ENCODE measurements at regions of chr9 and their contacts with region 1.

Region 1: DNA sequence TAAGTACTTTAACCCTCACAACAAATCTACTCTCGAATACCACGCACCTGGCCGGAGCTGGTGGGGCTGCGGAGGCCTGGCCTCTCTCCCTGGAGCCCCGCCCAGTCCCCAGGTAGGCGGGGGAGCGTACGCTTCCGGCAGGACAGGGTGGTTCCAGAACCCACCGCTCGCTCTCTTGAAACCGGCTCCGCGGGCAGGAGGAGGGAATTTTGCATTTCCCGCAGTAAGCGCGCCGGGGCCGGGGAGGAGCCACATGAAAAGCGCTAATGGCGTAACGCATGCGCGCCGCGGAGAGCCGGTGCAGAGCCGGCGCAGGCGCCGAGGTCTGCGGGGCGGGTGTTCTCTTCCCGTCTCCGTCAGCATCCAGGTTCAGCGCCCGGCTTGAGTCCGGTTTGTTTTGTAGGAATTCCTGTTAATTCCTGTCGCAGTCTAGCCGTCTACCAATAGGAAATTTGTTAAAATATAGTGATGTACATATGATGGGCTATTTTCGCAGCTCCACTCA is 20.8 kb downstream of the CAVIN4 start:
- DNase-seq: peak; percentile 63 to 76
- ATAC-seq: peak; percentile 69 to 90
- H3K4me3 ChIP-seq: peak overlapping the region; percentile 62
- H3K27ac ChIP-seq: peak overlapping the region; percentile 67 to 80
- H3K4me1 ChIP-seq: peaks cover 3% of the 10 kb centered on the region; the same call in 1 of the 3 replicates
- CTCF ChIP-seq: no peak
- EP300 ChIP-seq: no peak
- POLR2A ChIP-seq: peak; percentile 51
- RAD21 ChIP-seq: no peak

Region 2: GRCh38 chr9:100322954-100323536 is 275.6 kb before region 1 on chr9:
- CTCF ChIA-PET with region 1: interaction called, 12 read pairs
- POLR2A ChIA-PET with region 1: no interaction called
- DNase-seq: peak; percentile 18 to 52
- ATAC-seq: peak; percentile 65 to 71; a peak in 5 of 6 replicates
- H3K4me3 ChIP-seq: no peak overlapping the region
- H3K27ac ChIP-seq: no peak overlapping the region
- H3K4me1 ChIP-seq: no peaks in the 10 kb centered on the region
- CTCF ChIP-seq: peak; percentile 72
- EP300 ChIP-seq: no peak
- POLR2A ChIP-seq: no peak
- RAD21 ChIP-seq: peak; percentile 47 to 58

Region 3: DNA sequence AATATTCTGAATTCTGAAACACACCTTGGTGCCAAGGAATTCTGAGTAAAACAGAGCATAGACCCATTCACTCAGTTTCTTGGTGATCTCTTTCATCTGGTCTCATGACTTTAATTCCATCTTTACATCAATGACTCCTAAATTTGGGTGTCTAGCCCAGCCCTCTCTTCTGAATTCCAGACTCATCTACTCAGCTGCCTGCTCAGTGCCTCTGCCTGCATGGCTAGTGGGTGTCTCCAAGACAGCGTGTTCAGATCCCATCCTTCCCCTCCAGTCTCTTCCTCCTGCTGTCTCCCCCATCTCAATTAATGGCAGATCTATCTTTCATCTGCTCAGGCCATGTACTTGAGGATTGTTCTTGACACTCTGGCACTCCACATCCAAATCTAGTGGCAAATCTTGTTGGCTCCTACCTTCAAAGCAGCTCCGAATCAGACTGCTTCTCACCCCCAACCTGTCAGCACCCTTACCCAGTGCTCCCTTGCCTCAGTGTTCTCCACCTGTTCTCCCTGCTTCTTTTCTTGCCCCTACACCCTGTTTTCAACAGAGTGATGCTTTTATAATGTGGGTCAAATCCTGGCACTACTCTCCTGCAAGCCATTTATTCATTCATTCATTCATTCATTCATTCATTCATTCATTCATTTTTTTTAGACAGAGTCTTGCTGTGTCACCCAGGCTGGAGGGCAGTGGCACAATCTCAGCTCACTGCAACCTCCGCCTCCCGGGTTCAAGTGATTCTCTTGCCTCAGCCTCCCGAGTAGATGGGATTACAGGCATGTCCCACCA is 15.5 kb before region 1 on chr9:
- CTCF ChIA-PET with region 1: interaction called, 10 read pairs
- POLR2A ChIA-PET with region 1: no interaction called
- DNase-seq: no peak
- ATAC-seq: no peak
- H3K4me3 ChIP-seq: no peak overlapping the region
- H3K27ac ChIP-seq: no peak overlapping the region
- H3K4me1 ChIP-seq: peaks cover 14% of the 10 kb centered on the region
- CTCF ChIP-seq: no peak
- EP300 ChIP-seq: no peak
- POLR2A ChIP-seq: no peak
- RAD21 ChIP-seq: no peak

Region 4: DNA sequence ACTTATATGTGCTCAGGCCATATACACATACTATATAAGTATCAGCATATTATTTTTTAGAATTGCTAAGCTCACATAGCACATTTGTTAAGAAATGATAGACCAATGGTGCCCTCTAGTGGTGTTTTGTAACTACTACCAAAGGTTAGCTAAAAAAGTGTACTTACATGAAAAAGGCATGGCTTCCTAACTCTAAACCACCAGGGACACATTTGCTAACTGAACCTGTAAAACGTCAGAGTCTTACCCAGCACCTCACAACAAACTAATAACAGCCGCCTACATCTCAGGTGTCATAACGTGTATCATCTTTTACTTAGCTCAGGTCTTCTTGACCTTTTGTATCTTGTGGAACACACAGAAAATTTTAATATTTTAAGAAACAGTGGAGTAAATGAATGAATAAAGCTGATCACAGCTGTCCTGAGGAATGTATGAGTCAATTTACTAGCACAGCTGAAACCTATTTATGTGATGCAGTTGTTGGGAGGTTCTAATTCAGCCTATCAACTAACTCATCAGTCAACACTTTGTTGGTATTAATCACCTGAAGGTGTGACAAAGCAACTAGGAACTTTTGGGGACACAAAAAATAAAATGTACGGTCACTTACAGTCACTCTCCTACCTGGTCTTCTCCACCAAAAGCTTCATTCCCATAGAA is 713.2 kb after region 1 on chr9:
- CTCF ChIA-PET with region 1: interaction called, 62 read pairs
- POLR2A ChIA-PET with region 1: interaction called, 4 read pairs
- DNase-seq: peak; percentile 55 to 89
- ATAC-seq: peak; percentile 72 to 83; a peak in 4 of 6 replicates
- H3K4me3 ChIP-seq: no peak overlapping the region
- H3K27ac ChIP-seq: peak overlapping the region; percentile 78 to 82
- H3K4me1 ChIP-seq: peaks cover 40% of the 10 kb centered on the region
- CTCF ChIP-seq: peak; percentile 82
- EP300 ChIP-seq: no peak
- POLR2A ChIP-seq: no peak
- RAD21 ChIP-seq: peak; percentile 84 to 90